ENCODE measurements at regions of chr20 and their contacts with region 1.

Region 1: DNA sequence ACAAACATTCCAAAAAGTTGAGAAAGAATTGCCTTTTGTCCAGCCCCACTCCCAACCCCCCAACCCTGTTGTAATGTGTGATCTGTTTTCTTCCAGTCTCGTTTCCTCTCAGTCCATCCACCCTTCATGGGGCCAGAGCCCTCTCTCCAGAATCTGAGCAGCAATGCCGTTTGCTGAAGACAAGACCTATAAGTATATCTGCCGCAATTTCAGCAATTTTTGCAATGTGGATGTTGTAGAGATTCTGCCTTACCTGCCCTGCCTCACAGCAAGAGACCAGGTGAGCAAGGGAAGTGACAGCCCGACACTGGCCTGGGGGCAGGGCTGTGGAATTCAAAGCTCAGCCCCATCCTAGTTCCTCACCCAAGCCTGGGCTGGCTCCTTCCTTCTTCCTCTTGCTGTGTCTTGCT is 7.8 kb downstream of the MAVS start:
- DNase-seq: no peak
- H3K4me3 ChIP-seq: no peak overlapping the region
- H3K27ac ChIP-seq: no peak overlapping the region
- H3K4me1 ChIP-seq: peaks cover 0 to 18% (median 9%) of the 10 kb centered on the region in 4 donors
- H3K27me3 ChIP-seq: no peaks in the 10 kb centered on the region
- CTCF ChIP-seq: no peak
- EP300 ChIP-seq: no peak
- POLR2A ChIP-seq: no peak

Region 2: GRCh38 chr20:3753098-3753980 is 101.1 kb before region 1 on chr20:
- intact Hi-C with region 1: loop called (anchors 10 kb)
- DNase-seq: peak; percentile 70 to 90
- H3K4me3 ChIP-seq: no peak overlapping the region
- H3K27ac ChIP-seq: peak overlapping the region in 1 of 5 donors; percentile 46
- H3K4me1 ChIP-seq: peaks cover 16 to 50% (median 29%) of the 10 kb centered on the region in 4 donors
- H3K27me3 ChIP-seq: peaks cover 0 to 22% (median 13%) of the 10 kb centered on the region in 3 donors
- CTCF ChIP-seq: peak in 5 of 7 experiments; percentile 57 to 75 (median 69)
- EP300 ChIP-seq: no peak
- POLR2A ChIP-seq: no peak

Region 3: GRCh38 chr20:3781153-3781910 is 73.1 kb before region 1 on chr20 and contains the start of gene SPEF1:
- intact Hi-C with region 1: loop called (anchors 5 kb)
- DNase-seq: peak; percentile 76 to 96
- H3K4me3 ChIP-seq: peak within 1 kb of the TSS; percentile 29 to 48 (median 38)
- H3K27ac ChIP-seq: peak within 1 kb of the TSS in 4 of 5 donors; percentile 0 to 61 (median 48)
- H3K4me1 ChIP-seq: peaks cover 52 to 75% (median 66%) of the 10 kb centered on the region in 4 donors
- H3K27me3 ChIP-seq: peaks cover 0 to 17% (median 4%) of the 10 kb centered on the region in 3 donors
- CTCF ChIP-seq: peak in 4 of 7 experiments; percentile 3 to 45 (median 30)
- EP300 ChIP-seq: no peak
- POLR2A ChIP-seq: no peak
- total RNA-seq, gene SPEF1: not detected

Measured in stomach (tissue), 19 donors.